ENCODE measurements at regions of chr4 and their contacts with region 1.

Region 1: GRCh38 chr4:74133786-74134499 is 24.0 kb upstream of the MTHFD2L start:
- DNase-seq: peak; percentile 27
- H3K4me3 ChIP-seq: no peak overlapping the region; a peak in 1 of 4 replicates
- H3K27ac ChIP-seq: no peak overlapping the region
- H3K4me1 ChIP-seq: no peaks in the 10 kb centered on the region; a peak in 1 of 4 replicates
- H3K27me3 ChIP-seq: no peaks in the 10 kb centered on the region; the same call in 1 of the 2 replicates
- CTCF ChIP-seq: peak; percentile 96
- EP300 ChIP-seq: no peak
- RAD21 ChIP-seq: peak; percentile 89

Region 2: DNA sequence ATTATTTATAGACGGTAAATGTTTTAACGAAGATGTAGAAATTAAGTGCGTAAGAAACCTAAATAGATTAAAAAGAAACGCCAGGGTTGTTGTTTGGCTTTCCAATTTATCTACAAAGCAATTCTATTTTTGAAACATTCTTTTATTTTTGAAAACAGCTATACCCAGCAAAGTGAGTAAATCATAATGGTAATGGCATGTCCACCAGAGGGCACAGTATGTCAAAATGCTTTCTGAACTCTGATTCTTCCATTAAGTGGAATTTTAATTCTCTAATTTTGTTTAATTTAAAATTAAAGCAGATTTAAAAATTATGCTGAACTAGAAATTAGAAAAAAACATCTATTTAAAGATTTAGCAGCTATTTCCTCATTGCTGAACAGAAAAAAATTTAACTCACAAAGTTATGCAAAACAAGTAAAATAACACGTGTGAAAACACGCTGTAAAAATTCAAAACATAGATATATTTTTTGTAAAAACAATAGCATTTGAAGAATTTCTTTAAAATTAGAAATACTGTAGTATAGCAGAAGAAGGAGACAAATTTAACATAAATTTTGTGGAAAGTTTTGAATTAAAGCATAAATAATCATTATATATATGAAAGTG is 540.2 kb before region 1 on chr4:
- CTCF ChIA-PET with region 1: interaction called, 12 read pairs
- POLR2A ChIA-PET with region 1: no interaction called
- DNase-seq: no peak
- H3K4me3 ChIP-seq: no peak overlapping the region
- H3K27ac ChIP-seq: no peak overlapping the region
- H3K4me1 ChIP-seq: no peaks in the 10 kb centered on the region; a peak in 1 of 4 replicates
- H3K27me3 ChIP-seq: peaks cover 19% of the 10 kb centered on the region; the same call in 1 of the 2 replicates
- CTCF ChIP-seq: peak; percentile 76
- EP300 ChIP-seq: no peak
- RAD21 ChIP-seq: peak; percentile 33; the same call in 1 of the 2 replicates

Region 3: GRCh38 chr4:73729534-73730165 is 404.3 kb before region 1 on chr4:
- CTCF ChIA-PET with region 1: interaction called, 55 read pairs
- POLR2A ChIA-PET with region 1: no interaction called
- DNase-seq: peak; percentile 28
- H3K4me3 ChIP-seq: no peak overlapping the region
- H3K27ac ChIP-seq: peak overlapping the region in 1 of 2 experiments; percentile 46; a peak in 1 of 4 replicates
- H3K4me1 ChIP-seq: peaks cover 0 to 9% of the 10 kb centered on the region in 2 experiments; a peak in 1 of 4 replicates
- H3K27me3 ChIP-seq: no peaks in the 10 kb centered on the region
- CTCF ChIP-seq: peak; percentile 89
- EP300 ChIP-seq: no peak
- RAD21 ChIP-seq: peak; percentile 67

Region 4: GRCh38 chr4:74114234-74114633 is 19.7 kb before region 1 on chr4:
- CTCF ChIA-PET with region 1: interaction called, 13 read pairs
- POLR2A ChIA-PET with region 1: no interaction called
- DNase-seq: no peak
- H3K4me3 ChIP-seq: no peak overlapping the region
- H3K27ac ChIP-seq: peak overlapping the region in 1 of 2 experiments; percentile 87; a peak in 2 of 4 replicates
- H3K4me1 ChIP-seq: peaks cover 0 to 24% of the 10 kb centered on the region in 2 experiments; a peak in 2 of 4 replicates
- H3K27me3 ChIP-seq: no peaks in the 10 kb centered on the region
- CTCF ChIP-seq: no peak
- EP300 ChIP-seq: no peak
- RAD21 ChIP-seq: no peak

Region 5: DNA sequence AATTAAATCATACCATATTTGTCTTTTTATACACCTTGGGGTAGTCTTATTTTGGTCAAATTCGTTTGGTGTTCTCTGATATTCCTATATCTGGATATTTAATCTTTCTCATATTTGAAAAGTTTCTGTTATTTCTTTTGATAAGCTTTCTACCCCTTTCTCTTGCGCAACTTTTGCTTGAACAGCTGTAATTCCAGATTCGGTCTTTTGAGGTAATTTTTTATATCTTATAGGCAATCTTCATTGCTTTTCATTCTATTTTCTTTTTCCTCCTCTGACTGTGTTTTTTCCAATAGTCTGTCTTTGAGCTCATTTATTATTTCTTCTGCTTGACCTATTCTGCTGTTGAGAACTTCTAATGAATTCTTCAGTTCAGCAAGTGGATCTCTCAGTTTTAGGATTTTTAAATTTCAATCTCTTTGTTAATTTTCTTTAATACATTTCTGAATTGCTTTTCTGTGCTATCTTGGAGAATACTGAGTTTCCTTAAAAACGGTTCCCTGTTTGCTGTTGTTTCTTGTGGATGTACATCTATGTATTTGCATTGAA is 12.7 kb after region 1 on chr4:
- CTCF ChIA-PET with region 1: interaction called, 16 read pairs
- POLR2A ChIA-PET with region 1: no interaction called
- DNase-seq: no peak
- H3K4me3 ChIP-seq: no peak overlapping the region
- H3K27ac ChIP-seq: no peak overlapping the region
- H3K4me1 ChIP-seq: no peaks in the 10 kb centered on the region
- H3K27me3 ChIP-seq: peaks cover 25% of the 10 kb centered on the region; the same call in 1 of the 2 replicates
- CTCF ChIP-seq: no peak
- EP300 ChIP-seq: no peak
- RAD21 ChIP-seq: no peak

Region 6: GRCh38 chr4:74189331-74190043 is 55.5 kb after region 1 on chr4:
- CTCF ChIA-PET with region 1: no interaction called
- POLR2A ChIA-PET with region 1: no interaction called
- DNase-seq: peak; percentile 22
- H3K4me3 ChIP-seq: no peak overlapping the region; a peak in 1 of 4 replicates
- H3K27ac ChIP-seq: no peak overlapping the region
- H3K4me1 ChIP-seq: no peaks in the 10 kb centered on the region
- H3K27me3 ChIP-seq: no peaks in the 10 kb centered on the region
- CTCF ChIP-seq: peak; percentile 75
- EP300 ChIP-seq: no peak
- RAD21 ChIP-seq: peak; percentile 67

Measured in SK-N-SH (cell line).